Activated T-helper 1 cell treated with anti-CD3 and anti-CD28 coated beads, Interleukin-12 subunit alpha, Interleukin-12 subunit beta, Interleukin-2, Interleukin-4 antibody, amounts not matched to agents 30 ng/mL and 10 ng/mL and 1 ng/mL, durations not matched to agents 14 hours and 24 hours and 36 hours (primary cell): ENCODE measurements at regions of chr7 and their contacts with region 1.

Region 1: DNA sequence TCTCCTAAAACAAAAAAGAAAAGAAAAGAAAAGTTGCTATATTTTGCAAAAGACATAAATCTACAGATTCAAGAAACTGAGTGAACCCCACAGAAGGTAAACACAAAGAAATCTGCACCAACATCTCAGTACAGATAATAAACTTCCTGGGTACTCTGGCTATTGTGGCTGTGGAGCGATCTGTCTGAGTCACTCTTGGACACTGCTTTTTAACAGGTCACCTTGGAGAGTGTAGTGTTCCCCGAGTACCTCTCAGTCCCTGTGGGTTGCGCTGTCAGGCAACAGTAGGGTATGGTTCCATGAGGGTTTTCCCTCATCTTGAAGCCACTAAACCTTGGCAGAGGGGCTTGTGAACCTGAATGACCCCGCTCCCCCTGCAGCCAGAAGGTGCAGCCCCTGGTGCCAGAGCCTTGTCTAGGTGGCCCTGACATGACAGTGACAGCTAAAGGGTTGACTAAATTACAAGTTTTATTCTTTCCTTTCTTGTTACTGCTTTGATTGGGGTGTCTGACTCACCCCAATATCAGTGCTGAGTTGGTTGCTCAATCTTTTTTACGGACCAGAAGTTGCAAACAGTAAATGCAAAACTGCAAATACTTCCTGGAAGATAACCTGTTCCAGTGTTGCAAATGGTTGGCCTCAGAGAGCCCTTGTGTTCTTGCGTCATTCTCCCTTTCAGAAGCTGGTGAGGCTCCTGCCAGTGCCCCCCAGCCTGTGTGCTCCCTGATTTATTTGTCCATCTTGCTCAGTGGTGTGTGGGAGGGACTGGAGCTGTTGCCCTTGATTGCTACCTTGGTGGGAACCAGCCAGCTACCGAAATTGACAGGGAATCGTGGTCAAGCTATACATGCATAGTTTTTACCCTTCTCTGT is 30.6 kb downstream of the POR start:
- DNase-seq: no peak
- H3K4me3 Mint-ChIP-seq: no peak overlapping the region
- H3K27ac Mint-ChIP-seq: no peak overlapping the region
- H3K4me1 Mint-ChIP-seq: peaks cover 12% of the 10 kb centered on the region
- H3K27me3 Mint-ChIP-seq: no peaks in the 10 kb centered on the region

Region 2: DNA sequence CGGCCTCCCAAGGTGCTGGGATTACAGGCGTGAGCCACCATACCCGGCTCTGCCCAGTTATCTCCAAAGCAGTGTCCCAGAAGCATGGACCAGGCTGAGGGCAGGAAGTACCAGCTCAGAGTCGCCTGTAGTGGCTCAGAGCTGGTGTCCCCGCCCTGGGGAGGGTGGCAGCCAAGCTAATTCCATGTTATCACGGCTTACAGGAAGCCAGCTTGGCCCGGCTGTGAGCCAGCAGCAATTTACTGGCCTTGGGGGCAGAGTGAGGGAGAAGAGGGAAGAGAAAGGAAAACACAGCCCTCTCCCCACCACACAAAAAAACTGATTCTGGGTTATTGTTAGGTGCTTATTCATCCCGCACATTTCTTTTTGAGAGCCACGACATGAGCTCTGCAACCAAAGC is 294.9 kb before region 1 on chr7:
- intact Hi-C with region 1: loop called (anchors 10 kb)
- DNase-seq: no peak
- H3K4me3 Mint-ChIP-seq: no peak overlapping the region
- H3K27ac Mint-ChIP-seq: no peak overlapping the region
- H3K4me1 Mint-ChIP-seq: no peaks in the 10 kb centered on the region
- H3K27me3 Mint-ChIP-seq: no peaks in the 10 kb centered on the region